ENCODE measurements at regions of chr2 and their contacts with region 1.

Region 1: GRCh38 chr2:70686577-70687460 is 81.2 kb downstream of the ADD2 start:
- DNase-seq: peak; percentile 94 to 96 (median 94)
- ATAC-seq: peak; percentile 99
- H3K4me3 ChIP-seq: no peak overlapping the region
- H3K27ac ChIP-seq: peak overlapping the region; percentile 95
- H3K4me1 ChIP-seq: peaks cover 29 to 34% of the 10 kb centered on the region in 2 experiments
- H3K27me3 ChIP-seq: no peaks in the 10 kb centered on the region
- CTCF ChIP-seq: peak; percentile 93 to 97 (median 96)
- EP300 ChIP-seq: peak; percentile 98
- POLR2A ChIP-seq: peak; percentile 39; the same call in 1 of the 2 replicates
- RAD21 ChIP-seq: peak; percentile 80 to 84

Region 2: DNA sequence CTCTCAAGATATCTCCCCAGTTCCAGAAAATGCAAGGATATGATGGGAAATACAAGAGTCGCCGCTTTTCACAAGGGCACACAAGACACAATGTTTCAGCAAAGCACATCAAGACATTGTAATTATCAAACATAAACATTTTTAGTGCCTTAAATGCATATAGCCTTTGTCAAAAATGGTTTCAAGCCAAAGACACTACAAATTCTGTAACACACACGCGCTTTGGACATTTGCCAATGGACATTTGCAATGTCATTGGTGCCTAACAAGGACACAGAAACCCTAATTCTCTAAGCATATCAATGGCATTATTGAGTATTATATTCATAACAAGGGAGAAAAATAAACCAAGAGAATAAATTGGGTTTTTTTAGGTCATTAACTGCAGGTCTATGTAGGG is 65.1 kb after region 1 on chr2:
- CTCF ChIA-PET with region 1: interaction called, 4 read pairs
- POLR2A ChIA-PET with region 1: no interaction called
- in situ Hi-C with region 1: no loop called
- intact Hi-C with region 1: loop called (anchors 5 kb)
- DNase-seq: peak in 2 of 4 experiments; percentile 51 to 77
- ATAC-seq: 0 out of 3 replicates have a peak, but pooled peaks have one; percentile 34
- H3K4me3 ChIP-seq: no peak overlapping the region
- H3K27ac ChIP-seq: peak overlapping the region; percentile 21; the same call in 2 of the 3 replicates
- H3K4me1 ChIP-seq: peaks cover 7 to 29% of the 10 kb centered on the region in 2 experiments; a peak in 3 of 5 replicates
- H3K27me3 ChIP-seq: no peaks in the 10 kb centered on the region
- CTCF ChIP-seq: no peak
- EP300 ChIP-seq: no peak
- POLR2A ChIP-seq: no peak
- RAD21 ChIP-seq: no peak

Region 3: DNA sequence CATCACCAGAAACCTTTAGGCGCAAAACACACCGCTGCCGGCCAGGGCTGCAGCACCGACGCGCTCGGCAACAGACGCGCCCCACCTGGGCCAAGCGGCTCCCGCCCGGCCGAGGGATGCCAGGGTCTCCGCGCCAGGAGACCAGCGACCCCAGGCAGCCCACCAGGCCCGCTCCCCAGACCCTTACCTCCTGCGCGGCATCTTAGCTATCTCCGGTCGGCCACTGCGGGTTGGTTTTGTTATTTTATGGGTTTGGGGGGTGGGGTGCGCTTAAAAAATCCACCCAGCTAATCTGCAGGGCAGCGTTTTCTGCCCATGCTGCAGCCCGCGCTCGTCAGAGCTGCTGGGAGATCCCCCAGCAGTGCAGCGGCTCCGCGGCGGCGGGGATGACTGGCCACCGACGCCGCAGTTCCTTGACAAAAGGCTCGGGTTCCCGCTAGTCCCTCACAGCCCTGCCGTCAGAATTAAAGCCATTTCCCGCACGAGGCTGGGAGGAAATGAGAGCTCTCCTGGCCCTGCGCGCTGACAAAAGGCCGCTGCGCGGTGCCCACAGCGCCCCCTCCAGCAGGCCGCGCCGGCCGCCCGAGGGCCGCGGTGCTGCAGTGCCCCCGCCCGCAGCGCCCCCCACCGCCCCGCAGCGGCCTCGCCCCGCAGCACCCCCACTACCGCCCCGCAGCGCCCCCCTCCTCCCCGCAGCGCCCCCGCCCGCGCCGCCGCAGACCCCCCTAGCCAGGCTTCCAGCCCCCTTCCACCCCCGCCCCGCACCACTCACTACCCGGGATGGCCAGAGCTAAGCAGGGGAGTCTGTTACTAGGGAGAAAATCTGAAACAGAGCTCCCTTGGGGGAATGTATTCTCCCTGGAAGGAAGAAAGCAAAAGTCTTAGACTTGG is 81.1 kb after region 1 on chr2 and contains the start of gene ADD2:
- CTCF ChIA-PET with region 1: interaction called, 32 read pairs
- POLR2A ChIA-PET with region 1: interaction called, 7 read pairs
- in situ Hi-C with region 1: no loop called
- intact Hi-C with region 1: loop called (anchors 1 kb)
- DNase-seq: peak; percentile 78 to 87 (median 85)
- ATAC-seq: peak; percentile 95
- H3K4me3 ChIP-seq: peak within 1 kb of the TSS; percentile 73
- H3K27ac ChIP-seq: peak within 1 kb of the TSS; percentile 65
- H3K4me1 ChIP-seq: peaks cover 2 to 12% of the 10 kb centered on the region in 2 experiments; a peak in 4 of 5 replicates
- H3K27me3 ChIP-seq: no peaks in the 10 kb centered on the region; a peak in 1 of 5 replicates
- CTCF ChIP-seq: peak; percentile 55 to 96 (median 84)
- EP300 ChIP-seq: no peak
- POLR2A ChIP-seq: peak; percentile 61; the same call in 1 of the 2 replicates
- RAD21 ChIP-seq: peak; percentile 21 to 64; a peak in 3 of 4 replicates
- polyA plus RNA-seq, gene ADD2: 3.5 to 4.0 TPM

Region 4: GRCh38 chr2:70779911-70780545 is 93.2 kb after region 1 on chr2:
- CTCF ChIA-PET with region 1: interaction called, 3 read pairs
- POLR2A ChIA-PET with region 1: interaction called, 5 read pairs
- in situ Hi-C with region 1: loop called (anchors 5 kb)
- intact Hi-C with region 1: loop called (anchors 1 kb)
- DNase-seq: no peak
- ATAC-seq: no peak
- H3K4me3 ChIP-seq: no peak overlapping the region
- H3K27ac ChIP-seq: no peak overlapping the region
- H3K4me1 ChIP-seq: peaks cover 0 to 8% of the 10 kb centered on the region in 2 experiments; a peak in 3 of 5 replicates
- H3K27me3 ChIP-seq: no peaks in the 10 kb centered on the region
- CTCF ChIP-seq: no peak
- EP300 ChIP-seq: no peak
- POLR2A ChIP-seq: no peak
- RAD21 ChIP-seq: no peak

Region 5: DNA sequence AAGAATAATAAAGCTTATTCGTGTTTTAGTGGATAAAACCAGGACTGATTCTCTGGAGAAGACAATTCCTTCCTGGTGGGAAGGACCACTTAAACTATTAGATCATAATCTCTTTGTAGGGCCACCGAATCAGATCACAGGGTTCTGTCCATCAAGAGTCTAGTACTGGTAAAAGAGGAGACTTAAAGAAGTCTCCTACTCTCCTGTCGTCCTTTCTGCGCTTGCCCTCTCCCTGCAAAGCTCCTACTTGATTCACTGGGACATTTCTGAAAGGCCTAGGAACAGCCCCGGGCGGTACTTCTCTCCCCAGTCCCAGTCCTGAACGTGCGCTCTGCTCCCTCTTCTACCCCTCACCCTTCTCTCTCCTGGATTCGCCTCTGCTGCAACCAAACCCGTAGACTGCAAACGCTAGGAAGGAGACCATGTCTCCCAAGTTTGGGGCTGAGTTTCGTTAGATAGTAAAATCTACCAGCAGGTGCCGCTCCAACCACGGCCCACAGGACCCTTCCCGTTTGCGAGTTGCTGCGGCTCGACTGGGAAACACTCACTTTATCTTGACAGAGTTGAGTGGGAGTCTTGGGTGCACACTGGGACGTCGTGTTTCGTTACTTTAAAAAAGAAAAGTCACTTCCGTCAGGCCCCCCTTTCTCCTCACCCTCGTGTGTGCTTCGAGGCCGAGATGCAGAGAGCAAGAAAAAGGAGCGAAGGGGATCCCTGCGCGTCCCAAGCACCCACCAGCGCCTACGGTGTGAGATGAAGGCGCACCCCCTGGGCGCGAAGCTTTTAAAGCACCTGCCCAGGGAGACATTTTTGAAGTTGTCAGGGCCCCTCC is 102.7 kb after region 1 on chr2:
- CTCF ChIA-PET with region 1: interaction called, 3 read pairs
- POLR2A ChIA-PET with region 1: interaction called, 5 read pairs
- in situ Hi-C with region 1: loop called (anchors 5 kb)
- intact Hi-C with region 1: loop called (anchors 1 kb)
- DNase-seq: peak; percentile 52 to 78 (median 62)
- ATAC-seq: peak; percentile 90
- H3K4me3 ChIP-seq: no peak overlapping the region
- H3K27ac ChIP-seq: no peak overlapping the region
- H3K4me1 ChIP-seq: peaks cover 0 to 10% of the 10 kb centered on the region in 2 experiments; a peak in 3 of 5 replicates
- H3K27me3 ChIP-seq: peaks cover 6 to 16% of the 10 kb centered on the region in 2 experiments
- CTCF ChIP-seq: peak; percentile 86 to 87 (median 86)
- EP300 ChIP-seq: no peak
- POLR2A ChIP-seq: no peak
- RAD21 ChIP-seq: peak; percentile 53 to 77

Measured in K562 (cell line).